AG04450 (cell line): ENCODE measurements at regions of chr12 and their contacts with region 1.

Region 1: GRCh38 chr12:96466939-96467751 is 22.2 kb upstream of the CFAP54 start:
- DNase-seq: no peak
- H3K4me3 ChIP-seq: no peak overlapping the region
- H3K27ac ChIP-seq: no peak overlapping the region
- H3K27me3 ChIP-seq: no peaks in the 10 kb centered on the region
- CTCF ChIP-seq: no peak

Region 2: GRCh38 chr12:96208801-96209549 is 258.2 kb before region 1 on chr12:
- CTCF ChIA-PET with region 1: no interaction called
- POLR2A ChIA-PET with region 1: no interaction called
- DNase-seq: no peak
- H3K4me3 ChIP-seq: no peak overlapping the region
- H3K27ac ChIP-seq: no peak overlapping the region
- H3K27me3 ChIP-seq: no peaks in the 10 kb centered on the region
- CTCF ChIP-seq: 0 out of 2 replicates have a peak, but pooled peaks have one; percentile 20

Region 3: GRCh38 chr12:96456265-96456974 is 10.7 kb before region 1 on chr12:
- CTCF ChIA-PET with region 1: no interaction called
- POLR2A ChIA-PET with region 1: interaction called, 10 read pairs
- DNase-seq: no peak
- H3K4me3 ChIP-seq: no peak overlapping the region
- H3K27ac ChIP-seq: no peak overlapping the region
- H3K27me3 ChIP-seq: no peaks in the 10 kb centered on the region
- CTCF ChIP-seq: no peak

Region 4: DNA sequence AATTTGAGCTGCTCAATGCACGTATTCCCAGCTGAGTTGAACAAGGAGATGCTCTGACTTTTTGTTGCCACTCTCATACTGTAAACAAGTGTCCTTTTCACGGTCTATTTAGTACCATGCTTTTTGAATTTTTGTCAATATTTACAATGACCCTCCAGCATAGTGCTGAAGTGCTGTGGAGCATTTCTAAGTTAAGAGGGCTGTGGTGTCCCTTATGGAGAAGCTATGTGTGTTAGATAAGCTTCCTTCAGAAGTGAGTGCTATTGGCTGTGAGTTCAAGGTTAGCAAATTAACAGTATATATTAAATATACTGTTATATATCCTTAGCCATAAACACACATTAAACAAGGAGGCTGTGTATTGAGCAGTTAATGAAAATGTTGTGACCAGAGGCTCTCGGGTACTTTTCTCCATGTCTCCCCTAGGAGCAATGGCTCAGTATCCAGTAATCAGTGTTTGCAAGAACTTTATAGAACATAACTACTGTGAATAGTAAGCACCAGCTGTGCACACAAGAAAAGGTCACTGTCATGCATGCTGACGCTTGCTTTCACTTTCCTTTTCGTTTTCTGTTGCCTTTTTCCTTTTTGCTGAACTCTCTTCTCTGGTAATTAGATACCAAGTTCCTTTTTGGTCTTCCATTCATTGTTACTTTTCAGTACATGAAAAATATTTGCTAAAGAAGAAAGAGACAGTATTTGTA is 252.7 kb after region 1 on chr12:
- CTCF ChIA-PET with region 1: no interaction called
- POLR2A ChIA-PET with region 1: no interaction called
- DNase-seq: no peak
- H3K4me3 ChIP-seq: peak overlapping the region; percentile 56
- H3K27ac ChIP-seq: no peak overlapping the region
- H3K27me3 ChIP-seq: no peaks in the 10 kb centered on the region
- CTCF ChIP-seq: no peak